ENCODE measurements at regions of chr1 and their contacts with region 1.

Region 1: DNA sequence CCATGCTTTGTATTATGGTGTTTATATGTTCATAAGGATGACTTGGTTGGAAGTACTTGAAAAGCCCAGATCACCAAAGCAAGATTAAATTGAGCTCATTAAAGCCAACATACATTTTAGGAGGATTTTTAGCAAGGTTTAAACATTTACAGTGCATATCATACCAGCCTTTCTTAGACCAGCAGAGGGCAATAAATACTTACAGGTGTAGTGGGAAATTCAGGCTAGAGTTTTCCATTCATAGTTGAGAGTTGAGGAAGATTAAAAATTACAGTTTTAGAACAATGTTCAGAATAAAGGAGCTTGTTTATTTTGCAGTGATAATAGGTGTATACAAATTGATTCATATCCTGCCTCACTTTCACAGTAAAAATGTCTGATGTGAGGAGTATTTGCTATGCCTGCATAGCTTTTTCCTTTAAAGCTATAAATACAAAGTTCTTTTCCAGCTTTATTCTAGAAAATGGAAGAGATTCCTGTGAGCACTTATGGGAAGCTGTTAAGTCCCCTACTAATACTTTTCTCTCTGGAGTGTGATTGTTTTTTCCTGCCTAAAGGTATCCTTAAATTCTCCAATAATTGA is 35.3 kb downstream of the DTL start:
- DNase-seq: no peak
- ATAC-seq: peak; percentile 47
- H3K4me3 Mint-ChIP-seq: no peak overlapping the region
- H3K27ac Mint-ChIP-seq: no peak overlapping the region
- H3K4me1 Mint-ChIP-seq: peaks cover 3% of the 10 kb centered on the region
- H3K27me3 Mint-ChIP-seq: no peaks in the 10 kb centered on the region

Region 2: DNA sequence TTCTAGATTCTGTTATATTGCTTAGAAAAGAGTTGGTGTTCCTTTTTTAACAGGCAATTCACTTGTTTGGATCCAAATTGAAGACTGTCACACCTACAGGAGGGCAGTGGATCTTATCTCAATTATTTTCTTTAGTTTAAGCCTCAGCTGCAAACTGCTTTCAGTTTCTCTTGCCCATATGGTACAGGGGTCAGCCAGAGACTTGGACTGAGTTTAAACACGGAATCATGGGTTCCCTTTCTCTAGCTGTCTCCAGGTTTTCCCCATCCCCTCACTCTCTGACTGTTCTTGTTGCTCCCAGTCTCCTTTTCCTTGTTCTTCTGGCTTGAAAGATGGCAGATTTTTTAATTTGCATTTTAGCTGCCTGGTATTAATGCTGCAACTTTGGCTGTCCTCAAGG is 16.8 kb before region 1 on chr1:
- CTCF ChIA-PET with region 1: no interaction called
- DNase-seq: no peak
- ATAC-seq: no peak
- H3K4me3 Mint-ChIP-seq: no peak overlapping the region
- H3K27ac Mint-ChIP-seq: no peak overlapping the region
- H3K4me1 Mint-ChIP-seq: peaks cover 3% of the 10 kb centered on the region
- H3K27me3 Mint-ChIP-seq: no peaks in the 10 kb centered on the region

Region 3: GRCh38 chr1:212284744-212285684 is 214.2 kb after region 1 on chr1 and contains the start of gene PPP2R5A:
- CTCF ChIA-PET with region 1: interaction called, 14 read pairs
- DNase-seq: peak; percentile 99
- ATAC-seq: peak; percentile 91
- H3K4me3 Mint-ChIP-seq: peak within 1 kb of the TSS; percentile 90
- H3K27ac Mint-ChIP-seq: peak within 1 kb of the TSS; percentile 96
- H3K4me1 Mint-ChIP-seq: peaks cover 35% of the 10 kb centered on the region
- H3K27me3 Mint-ChIP-seq: no peaks in the 10 kb centered on the region
- total RNA-seq, gene PPP2R5A: 42.7 to 44.0 TPM

Region 4: GRCh38 chr1:212291505-212292134 is 220.8 kb after region 1 on chr1:
- CTCF ChIA-PET with region 1: interaction called, 14 read pairs
- DNase-seq: no peak
- ATAC-seq: peak; percentile 84
- H3K4me3 Mint-ChIP-seq: peak overlapping the region; percentile 7
- H3K27ac Mint-ChIP-seq: peak overlapping the region; percentile 16
- H3K4me1 Mint-ChIP-seq: peaks cover 73% of the 10 kb centered on the region
- H3K27me3 Mint-ChIP-seq: no peaks in the 10 kb centered on the region